ENCODE measurements at regions of chr6 and their contacts with region 1.

Region 1: DNA sequence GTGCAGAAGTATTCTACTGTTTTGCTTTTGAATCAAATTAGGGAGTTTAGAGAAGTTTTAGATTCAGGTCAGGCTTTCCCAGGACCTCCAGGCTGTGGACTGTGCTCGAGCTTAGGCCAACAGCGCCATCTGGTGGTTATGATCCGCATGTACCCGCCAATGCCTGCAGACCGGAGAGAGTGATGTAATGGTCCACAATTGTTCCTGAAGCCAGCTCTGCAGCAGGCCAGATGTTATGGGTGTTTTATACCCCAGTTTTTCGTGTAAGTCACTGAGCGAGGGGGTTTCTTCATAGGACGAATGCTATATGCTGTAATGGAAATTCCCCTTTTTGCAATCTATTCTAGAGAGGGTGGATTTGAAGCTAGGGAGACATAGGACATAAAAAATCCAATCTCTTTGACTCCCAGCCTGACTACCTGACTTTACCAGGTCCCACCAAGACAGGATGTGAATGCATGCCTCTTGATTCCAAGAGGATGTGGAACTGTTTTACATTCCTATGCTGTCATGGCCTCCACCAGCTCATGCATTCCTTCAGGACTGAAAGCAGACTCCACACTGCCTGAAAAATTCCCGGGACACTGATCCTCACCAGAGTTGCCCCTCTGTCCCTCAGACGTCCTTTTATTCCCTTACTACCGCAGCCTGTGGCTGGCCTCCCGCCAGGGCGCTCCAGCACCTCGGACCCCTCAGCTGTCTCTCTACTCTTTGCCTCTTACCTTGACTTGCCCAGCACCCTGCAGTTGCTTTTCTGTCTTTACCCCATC is 41.2 kb upstream of the LY86 start:
- DNase-seq: peak; percentile 71
- H3K4me3 ChIP-seq: peak overlapping the region; percentile 37 to 44 (median 43)
- H3K27ac ChIP-seq: no peak overlapping the region
- H3K4me1 ChIP-seq: peaks cover 12% of the 10 kb centered on the region
- H3K27me3 ChIP-seq: no peaks in the 10 kb centered on the region
- CTCF ChIP-seq: peak; percentile 87 to 94

Region 2: DNA sequence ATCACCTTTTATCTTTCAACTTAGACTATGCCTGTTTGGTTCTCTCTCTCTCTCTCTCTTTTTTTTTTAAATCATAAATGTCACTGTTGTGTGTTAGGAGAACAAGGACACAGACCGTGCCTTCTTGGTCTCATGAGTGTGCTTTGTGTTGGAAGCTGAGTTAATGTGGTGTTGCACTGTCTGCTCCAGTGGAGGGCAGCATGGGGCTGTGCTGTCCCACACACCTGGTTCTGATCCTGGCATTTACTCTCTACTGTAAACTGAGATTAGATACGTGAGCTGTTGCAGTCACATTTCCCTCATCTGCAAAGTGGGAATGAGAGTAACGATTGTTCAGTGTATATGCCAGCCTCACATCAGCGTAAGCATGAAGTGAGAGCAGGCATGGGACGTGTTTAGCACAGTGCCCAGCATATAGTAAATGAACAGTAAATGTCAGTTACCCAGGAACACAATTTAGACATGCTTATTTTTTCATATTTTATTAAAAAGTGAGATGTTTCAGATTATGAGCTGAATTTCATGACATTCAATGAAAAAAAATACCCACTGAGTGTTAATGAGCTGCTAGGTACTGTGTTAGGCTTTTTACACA is 1124.9 kb before region 1 on chr6:
- CTCF ChIA-PET with region 1: interaction called, 4 read pairs
- dilution Hi-C with region 1: no loop called
- in situ Hi-C with region 1: loop called in 1 of 2 experiments (anchors 25 kb)
- intact Hi-C with region 1: loop called (anchors 1 kb)
- DNase-seq: peak; percentile 14
- H3K4me3 ChIP-seq: no peak overlapping the region
- H3K27ac ChIP-seq: no peak overlapping the region
- H3K4me1 ChIP-seq: no peaks in the 10 kb centered on the region
- H3K27me3 ChIP-seq: no peaks in the 10 kb centered on the region
- CTCF ChIP-seq: peak; percentile 64 to 78

Region 3: GRCh38 chr6:6057424-6058053 is 489.8 kb before region 1 on chr6:
- CTCF ChIA-PET with region 1: interaction called, 4 read pairs
- dilution Hi-C with region 1: no loop called
- in situ Hi-C with region 1: loop called (anchors 5 to 10 kb)
- intact Hi-C with region 1: loop called (anchors 1 kb)
- DNase-seq: peak; percentile 36
- H3K4me3 ChIP-seq: no peak overlapping the region
- H3K27ac ChIP-seq: no peak overlapping the region
- H3K4me1 ChIP-seq: no peaks in the 10 kb centered on the region
- H3K27me3 ChIP-seq: no peaks in the 10 kb centered on the region
- CTCF ChIP-seq: peak; percentile 62 to 65

Region 4: DNA sequence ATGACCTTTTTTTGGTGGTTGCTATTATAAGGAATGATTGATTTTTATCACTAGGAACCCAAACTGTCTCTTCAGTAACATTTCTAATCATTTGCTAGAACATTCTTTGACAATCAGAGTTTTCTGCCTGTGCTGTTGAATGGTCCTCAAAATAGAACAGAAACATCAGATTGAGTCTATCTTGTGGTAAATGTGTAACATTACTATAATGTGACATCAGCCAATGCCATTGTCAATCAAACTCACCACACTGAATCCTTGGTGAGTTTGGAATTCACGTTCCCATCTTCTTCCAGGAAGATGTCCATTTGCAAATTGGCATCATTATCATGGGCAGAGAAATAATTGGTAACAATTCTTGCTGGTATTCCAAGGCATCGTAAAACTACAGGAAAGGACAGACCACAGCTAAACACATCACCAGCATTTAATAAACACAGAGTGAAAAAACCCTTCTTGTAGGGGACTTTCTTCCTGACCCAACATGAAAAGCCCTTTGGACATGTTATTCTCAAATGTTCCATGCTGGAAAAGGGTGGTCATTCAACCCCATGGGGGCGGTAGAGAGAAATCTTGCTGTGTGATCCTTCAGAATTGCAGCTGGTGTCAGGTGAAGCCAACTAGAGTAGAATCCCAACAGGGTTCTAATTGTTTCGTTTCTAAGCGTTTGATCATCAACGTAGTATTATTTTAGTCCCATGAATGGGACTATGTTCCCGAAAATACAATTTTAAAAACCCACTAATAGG is 325.3 kb before region 1 on chr6:
- CTCF ChIA-PET with region 1: interaction called, 6 read pairs
- dilution Hi-C with region 1: no loop called
- in situ Hi-C with region 1: no loop called
- intact Hi-C with region 1: loop called (anchors 2 kb)
- DNase-seq: no peak
- H3K4me3 ChIP-seq: no peak overlapping the region
- H3K27ac ChIP-seq: no peak overlapping the region
- H3K4me1 ChIP-seq: no peaks in the 10 kb centered on the region
- H3K27me3 ChIP-seq: no peaks in the 10 kb centered on the region
- CTCF ChIP-seq: peak; percentile 32 to 36

Region 5: DNA sequence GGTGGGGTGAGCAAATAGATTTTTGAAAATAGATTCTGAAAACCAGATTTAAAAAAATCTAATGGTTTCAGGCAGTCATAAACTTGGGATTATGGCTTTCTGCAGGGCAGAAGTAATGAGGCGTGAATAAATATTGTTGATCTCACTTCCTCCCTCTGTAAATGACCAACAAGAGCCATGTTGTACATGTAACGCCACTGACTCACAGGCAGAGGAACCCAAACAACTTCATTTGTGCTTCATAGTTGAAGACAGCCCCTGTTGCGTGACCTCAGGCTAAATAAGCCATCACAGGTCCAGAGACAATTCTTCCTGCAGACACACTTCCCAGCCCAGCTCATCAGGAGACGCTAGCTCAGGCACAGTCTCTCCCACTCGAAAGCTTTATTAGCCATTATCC is 167.7 kb before region 1 on chr6:
- CTCF ChIA-PET with region 1: no interaction called
- dilution Hi-C with region 1: no loop called
- in situ Hi-C with region 1: no loop called
- intact Hi-C with region 1: loop called (anchors 5 kb)
- DNase-seq: no peak
- H3K4me3 ChIP-seq: no peak overlapping the region
- H3K27ac ChIP-seq: no peak overlapping the region
- H3K4me1 ChIP-seq: no peaks in the 10 kb centered on the region
- H3K27me3 ChIP-seq: peaks cover 3% of the 10 kb centered on the region
- CTCF ChIP-seq: no peak

Region 6: GRCh38 chr6:6591778-6592465 is 44.6 kb after region 1 on chr6:
- CTCF ChIA-PET with region 1: no interaction called
- dilution Hi-C with region 1: no loop called
- in situ Hi-C with region 1: no loop called
- intact Hi-C with region 1: no loop called
- DNase-seq: no peak
- H3K4me3 ChIP-seq: no peak overlapping the region
- H3K27ac ChIP-seq: no peak overlapping the region
- H3K4me1 ChIP-seq: no peaks in the 10 kb centered on the region
- H3K27me3 ChIP-seq: no peaks in the 10 kb centered on the region
- CTCF ChIP-seq: no peak